Sigmoid colon (tissue), 7 donors: ENCODE measurements at regions of chr4 and their contacts with region 1.

Region 1: GRCh38 chr4:183074296-183074990 is 24.6 kb upstream of the WWC2 start:
- DNase-seq: no peak
- H3K4me3 ChIP-seq: no peak overlapping the region
- H3K27ac ChIP-seq: no peak overlapping the region
- H3K4me1 ChIP-seq: no peaks in the 10 kb centered on the region
- H3K27me3 ChIP-seq: no peaks in the 10 kb centered on the region
- CTCF ChIP-seq: no peak
- EP300 ChIP-seq: no peak
- POLR2A ChIP-seq: no peak

Region 2: GRCh38 chr4:182938205-182938645 is 136.2 kb before region 1 on chr4:
- intact Hi-C with region 1: loop called (anchors 5 kb)
- DNase-seq: peak; percentile 77
- H3K4me3 ChIP-seq: no peak overlapping the region
- H3K27ac ChIP-seq: no peak overlapping the region
- H3K4me1 ChIP-seq: no peaks in the 10 kb centered on the region
- H3K27me3 ChIP-seq: no peaks in the 10 kb centered on the region
- CTCF ChIP-seq: peak; percentile 65 to 85 (median 76)
- EP300 ChIP-seq: no peak
- POLR2A ChIP-seq: no peak

Region 3: DNA sequence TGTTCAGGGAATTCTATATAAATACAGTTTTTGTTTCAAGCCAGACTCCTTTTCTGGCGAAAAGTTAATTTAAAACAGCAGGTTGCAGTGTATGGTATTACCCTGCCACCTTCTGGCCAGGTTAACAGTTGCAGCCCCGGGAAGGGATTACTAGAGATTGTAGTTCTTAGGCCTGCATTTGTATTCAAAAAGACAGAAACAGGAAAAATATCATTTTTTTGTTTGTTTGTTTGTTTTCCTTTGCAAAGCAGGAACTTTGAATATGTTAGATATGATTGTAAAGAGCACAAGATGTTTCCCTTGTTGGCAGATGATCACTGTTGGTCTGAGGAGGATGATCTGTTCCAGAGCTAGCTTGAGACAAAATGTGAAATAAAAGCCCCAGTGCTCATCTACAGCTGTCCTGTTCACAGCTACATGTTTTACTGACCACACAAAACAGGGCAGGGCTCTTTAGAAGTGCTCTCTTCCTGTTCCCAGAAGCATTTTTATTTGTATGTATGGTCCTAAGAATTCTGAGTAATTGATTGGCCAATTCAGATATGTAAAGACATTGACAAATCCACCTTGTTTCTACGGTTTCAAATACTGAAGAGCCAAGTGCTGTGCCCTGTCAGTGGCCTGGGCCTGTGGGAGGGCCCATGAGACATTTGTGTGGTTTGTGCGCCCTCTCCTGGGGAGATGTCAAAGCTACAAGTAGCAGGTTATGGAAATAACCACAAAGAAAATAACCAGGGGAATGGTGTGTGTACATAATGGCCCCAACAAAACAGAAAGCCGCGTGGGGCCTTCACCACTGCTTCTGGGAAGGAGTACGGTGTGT is 187.7 kb after region 1 on chr4:
- intact Hi-C with region 1: loop called (anchors 1 kb)
- DNase-seq: peak; percentile 89
- H3K4me3 ChIP-seq: no peak overlapping the region
- H3K27ac ChIP-seq: peak overlapping the region in 3 of 4 donors; percentile 3 to 71 (median 67)
- H3K4me1 ChIP-seq: peaks cover 0 to 14% (median 10%) of the 10 kb centered on the region in 4 donors
- H3K27me3 ChIP-seq: no peaks in the 10 kb centered on the region
- CTCF ChIP-seq: peak; percentile 67 to 81 (median 72)
- EP300 ChIP-seq: no peak
- POLR2A ChIP-seq: no peak